Stomach (tissue), 19 donors: ENCODE measurements at regions of chr17 and their contacts with region 1.

Region 1: DNA sequence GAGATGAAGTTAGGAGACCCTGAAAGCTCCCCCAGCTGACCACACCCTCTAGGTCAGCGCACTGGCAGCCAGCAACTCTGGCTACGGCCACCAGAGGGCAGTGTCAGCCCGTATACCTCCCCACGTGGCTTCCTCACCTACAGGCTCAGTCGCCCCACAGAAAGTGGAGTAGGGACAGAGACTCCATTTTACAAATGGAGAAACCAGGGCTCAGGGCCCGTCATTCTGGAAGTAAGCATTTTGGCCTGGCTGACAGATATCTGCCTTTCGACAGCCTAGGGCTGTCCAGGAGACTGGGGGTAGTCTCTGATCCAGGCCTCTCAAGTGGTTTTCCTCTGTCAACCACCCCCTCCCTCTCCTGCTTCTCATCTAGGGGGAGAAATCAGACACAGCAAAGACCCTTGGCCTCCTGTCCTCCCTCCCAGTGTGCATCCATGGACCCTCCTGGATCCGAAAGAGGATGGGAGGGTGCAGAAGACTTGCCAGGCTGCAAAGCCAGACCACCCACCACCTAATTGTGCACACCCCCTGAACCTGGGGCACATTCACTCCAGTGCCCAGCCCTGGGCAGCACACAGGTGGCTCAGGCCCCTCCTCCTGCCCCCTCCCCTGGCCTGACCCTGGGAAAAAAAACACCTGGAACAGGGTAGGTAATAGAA is 3.8 kb upstream of the HAP1 start:
- DNase-seq: peak; percentile 90 to 94
- H3K4me3 ChIP-seq: no peak overlapping the region
- H3K27ac ChIP-seq: no peak overlapping the region
- H3K4me1 ChIP-seq: peaks cover 15 to 28% (median 22%) of the 10 kb centered on the region in 4 donors
- H3K27me3 ChIP-seq: peaks cover 17 to 47% (median 41%) of the 10 kb centered on the region in 3 donors
- CTCF ChIP-seq: peak in 5 of 7 experiments; percentile 96 to 99 (median 97)
- EP300 ChIP-seq: no peak
- POLR2A ChIP-seq: no peak

Region 2: GRCh38 chr17:41773190-41773588 is 35.0 kb after region 1 on chr17:
- intact Hi-C with region 1: no loop called
- DNase-seq: peak; percentile 87 to 95
- H3K4me3 ChIP-seq: no peak overlapping the region
- H3K27ac ChIP-seq: peak overlapping the region; percentile 74 to 94 (median 86)
- H3K4me1 ChIP-seq: peaks cover 64 to 71% (median 68%) of the 10 kb centered on the region in 4 donors
- H3K27me3 ChIP-seq: no peaks in the 10 kb centered on the region
- CTCF ChIP-seq: no peak
- EP300 ChIP-seq: no peak
- POLR2A ChIP-seq: no peak

Region 3: GRCh38 chr17:41786227-41787020 is 48.2 kb after region 1 on chr17 and contains the start of gene JUP:
- intact Hi-C with region 1: no loop called
- DNase-seq: peak; percentile 100
- H3K4me3 ChIP-seq: peak within 1 kb of the TSS; percentile 61 to 76 (median 64)
- H3K27ac ChIP-seq: peak within 1 kb of the TSS; percentile 93 to 99 (median 96)
- H3K4me1 ChIP-seq: peaks cover 35 to 63% (median 55%) of the 10 kb centered on the region in 4 donors
- H3K27me3 ChIP-seq: peaks cover 0 to 29% (median 0%) of the 10 kb centered on the region in 3 donors
- CTCF ChIP-seq: peak in 4 of 7 experiments; percentile 48 to 65 (median 52)
- EP300 ChIP-seq: no peak
- POLR2A ChIP-seq: peak in 2 of 4 donors; percentile 93 to 97
- total RNA-seq, gene JUP: 59.5 to 248 (median 84.8) TPM

Region 4: DNA sequence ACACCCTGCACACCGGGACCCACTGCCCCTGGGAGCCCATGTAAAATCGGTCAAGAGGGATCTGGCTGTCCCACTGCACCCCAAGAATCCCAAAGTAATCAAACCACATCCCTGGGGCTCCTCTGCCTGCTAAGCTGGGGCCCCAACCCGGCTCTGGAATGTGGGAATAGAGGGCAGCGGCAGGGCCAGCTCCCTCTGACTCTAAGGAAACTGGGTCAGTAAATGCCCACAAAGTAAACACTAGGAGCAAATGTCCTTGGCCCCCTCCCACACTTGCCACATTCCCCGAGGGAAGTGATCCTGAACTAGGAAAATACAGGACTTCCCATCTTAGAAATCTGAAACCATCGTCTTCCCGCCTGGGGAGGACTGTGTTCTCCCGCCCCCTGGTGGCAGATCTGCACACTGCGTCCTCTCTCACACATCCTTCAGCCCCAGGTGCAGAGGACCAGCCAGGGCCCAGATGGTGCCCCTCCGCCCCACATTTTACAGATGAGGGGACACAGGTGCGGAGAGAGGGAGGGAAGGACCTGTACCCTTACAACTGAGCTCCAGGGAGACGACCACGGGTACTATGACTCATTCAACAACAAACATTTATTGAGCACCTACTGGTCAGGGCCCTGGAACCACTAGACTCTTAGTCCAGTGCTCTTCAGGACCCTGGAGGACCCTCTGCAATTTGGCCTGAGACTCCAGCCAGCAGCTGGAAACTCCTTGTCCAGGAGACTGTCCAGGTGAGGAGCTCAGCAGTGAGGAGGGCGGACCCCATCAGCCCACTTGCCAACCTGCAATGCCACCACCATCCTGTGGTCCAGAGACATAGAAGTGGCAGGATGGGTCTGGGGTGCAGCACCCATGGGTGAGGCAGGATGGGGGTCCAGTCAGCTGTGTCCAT is 63.4 kb after region 1 on chr17:
- intact Hi-C with region 1: loop called (anchors 5 kb)
- DNase-seq: peak; percentile 89 to 93
- H3K4me3 ChIP-seq: peak overlapping the region in 1 of 4 donors; percentile 14
- H3K27ac ChIP-seq: peak overlapping the region in 4 of 5 donors; percentile 23 to 72 (median 40)
- H3K4me1 ChIP-seq: peaks cover 8 to 19% (median 12%) of the 10 kb centered on the region in 4 donors
- H3K27me3 ChIP-seq: no peaks in the 10 kb centered on the region
- CTCF ChIP-seq: peak in 6 of 7 experiments; percentile 59 to 98 (median 96)
- EP300 ChIP-seq: no peak
- POLR2A ChIP-seq: no peak

Region 5: DNA sequence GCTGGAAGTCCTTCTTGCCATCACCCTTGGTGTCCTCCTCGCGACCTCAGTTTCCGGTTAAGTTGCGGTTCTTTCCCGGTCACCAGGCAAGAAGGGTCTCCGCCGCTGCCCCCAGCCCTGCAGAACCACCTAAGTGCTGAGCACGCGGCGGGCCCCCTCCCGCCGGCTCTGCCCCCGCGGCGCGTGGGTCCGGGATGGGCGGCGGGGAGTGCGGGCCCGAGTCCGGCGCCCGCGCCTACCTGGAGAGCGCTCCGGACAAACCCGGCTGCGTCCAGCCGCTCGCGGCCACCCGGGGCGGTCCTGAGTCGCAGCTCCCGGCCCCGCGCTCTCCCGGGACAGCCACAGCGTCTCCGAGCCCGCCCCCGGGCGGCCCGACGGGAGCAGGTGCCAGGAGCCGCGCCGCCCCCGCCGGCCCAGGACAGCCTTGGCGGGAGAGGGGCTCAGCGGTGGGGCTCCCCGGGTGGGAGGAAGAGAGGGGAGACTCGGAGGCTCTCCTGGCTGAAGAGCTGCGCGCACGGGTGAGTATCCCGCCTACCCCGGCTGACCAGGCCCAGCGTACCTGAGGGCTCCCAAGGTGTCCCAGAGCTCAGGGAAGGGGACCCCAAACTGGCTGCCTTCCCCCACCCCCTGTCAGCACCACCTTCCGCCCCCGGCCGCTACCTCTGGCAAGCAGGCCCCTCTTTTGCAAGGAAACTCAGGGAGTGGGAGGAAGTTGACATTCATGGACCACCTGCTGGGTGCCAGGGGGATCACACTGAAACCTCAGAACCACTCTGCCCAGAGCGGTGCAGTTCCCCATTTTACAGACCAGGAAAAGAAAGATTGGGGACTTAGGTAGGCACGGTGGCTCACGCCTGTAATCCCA is 334.3 kb after region 1 on chr17:
- intact Hi-C with region 1: no loop called
- DNase-seq: peak; percentile 48 to 72
- H3K4me3 ChIP-seq: peak overlapping the region; percentile 33 to 49 (median 40)
- H3K27ac ChIP-seq: no peak overlapping the region
- H3K4me1 ChIP-seq: peaks cover 11 to 14% (median 12%) of the 10 kb centered on the region in 4 donors
- H3K27me3 ChIP-seq: peaks cover 0 to 47% (median 27%) of the 10 kb centered on the region in 3 donors
- CTCF ChIP-seq: peak in 1 of 7 experiments; percentile 10
- EP300 ChIP-seq: no peak
- POLR2A ChIP-seq: no peak